Caco-2 (cell line): ENCODE measurements at regions of chr19 and their contacts with region 1.

Region 1: DNA sequence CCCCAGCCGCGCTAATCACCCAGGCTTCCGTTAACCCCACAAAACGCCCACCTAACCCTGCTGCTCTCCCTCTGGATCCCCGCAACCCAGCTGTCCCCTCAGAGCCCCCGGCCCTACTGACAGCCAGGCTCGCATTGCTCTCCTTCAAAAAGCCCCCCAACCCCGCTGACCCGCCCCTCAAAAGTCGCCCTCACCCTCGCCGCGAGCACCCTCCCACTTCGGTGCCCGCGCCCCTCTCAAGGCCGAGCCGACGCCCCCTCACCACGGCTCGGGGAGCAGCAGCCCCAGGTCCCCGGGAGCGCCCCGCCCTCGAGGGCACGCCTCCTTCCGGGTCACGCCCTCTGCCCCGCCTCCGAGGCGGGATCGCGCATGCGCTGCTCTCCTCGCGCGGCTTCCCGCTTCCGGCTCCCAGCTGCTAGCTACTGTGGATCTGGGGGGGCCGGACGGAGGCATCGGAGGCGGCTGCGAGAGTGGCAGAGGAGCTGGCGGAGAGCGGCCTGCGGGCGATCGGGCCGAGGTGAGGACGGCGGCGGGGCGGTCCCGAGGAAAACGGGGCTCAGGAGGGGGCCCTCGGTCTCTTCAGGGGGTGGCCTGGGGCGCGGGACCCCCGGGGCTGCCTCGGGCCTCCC is 46.1 kb downstream of the ARHGEF18 start:
- DNase-seq: peak; percentile 86 to 94
- H3K4me3 ChIP-seq: peak overlapping the region; percentile 98
- H3K4me3 Mint-ChIP-seq: peak overlapping the region; percentile 89
- H3K27ac Mint-ChIP-seq: peak overlapping the region; percentile 48
- H3K4me1 ChIP-seq: peaks cover 26% of the 10 kb centered on the region
- H3K4me1 Mint-ChIP-seq: peaks cover 16% of the 10 kb centered on the region
- H3K27me3 ChIP-seq: no peaks in the 10 kb centered on the region
- H3K27me3 Mint-ChIP-seq: no peaks in the 10 kb centered on the region
- CTCF ChIP-seq: peak in 1 of 2 experiments; percentile 21

Region 2: GRCh38 chr19:7326105-7326877 is 68.6 kb before region 1 on chr19:
- CTCF ChIA-PET with region 1: no interaction called
- POLR2A ChIA-PET with region 1: no interaction called
- intact Hi-C with region 1: no loop called
- DNase-seq: peak in 1 of 2 experiments; percentile 38
- H3K4me3 ChIP-seq: no peak overlapping the region
- H3K4me3 Mint-ChIP-seq: no peak overlapping the region
- H3K27ac Mint-ChIP-seq: no peak overlapping the region
- H3K4me1 ChIP-seq: peaks cover 3% of the 10 kb centered on the region
- H3K4me1 Mint-ChIP-seq: peaks cover 3% of the 10 kb centered on the region
- H3K27me3 ChIP-seq: no peaks in the 10 kb centered on the region
- H3K27me3 Mint-ChIP-seq: no peaks in the 10 kb centered on the region
- CTCF ChIP-seq: peak in 1 of 2 experiments; percentile 38

Region 3: GRCh38 chr19:7349961-7350711 is 44.7 kb before region 1 on chr19:
- CTCF ChIA-PET with region 1: interaction called, 3 read pairs
- POLR2A ChIA-PET with region 1: no interaction called
- intact Hi-C with region 1: loop called (anchors 5 kb)
- DNase-seq: peak in 1 of 2 experiments; percentile 15
- H3K4me3 ChIP-seq: no peak overlapping the region
- H3K4me3 Mint-ChIP-seq: no peak overlapping the region
- H3K27ac Mint-ChIP-seq: no peak overlapping the region
- H3K4me1 ChIP-seq: no peaks in the 10 kb centered on the region
- H3K4me1 Mint-ChIP-seq: peaks cover 12% of the 10 kb centered on the region
- H3K27me3 ChIP-seq: no peaks in the 10 kb centered on the region
- H3K27me3 Mint-ChIP-seq: no peaks in the 10 kb centered on the region
- CTCF ChIP-seq: no peak

Region 4: DNA sequence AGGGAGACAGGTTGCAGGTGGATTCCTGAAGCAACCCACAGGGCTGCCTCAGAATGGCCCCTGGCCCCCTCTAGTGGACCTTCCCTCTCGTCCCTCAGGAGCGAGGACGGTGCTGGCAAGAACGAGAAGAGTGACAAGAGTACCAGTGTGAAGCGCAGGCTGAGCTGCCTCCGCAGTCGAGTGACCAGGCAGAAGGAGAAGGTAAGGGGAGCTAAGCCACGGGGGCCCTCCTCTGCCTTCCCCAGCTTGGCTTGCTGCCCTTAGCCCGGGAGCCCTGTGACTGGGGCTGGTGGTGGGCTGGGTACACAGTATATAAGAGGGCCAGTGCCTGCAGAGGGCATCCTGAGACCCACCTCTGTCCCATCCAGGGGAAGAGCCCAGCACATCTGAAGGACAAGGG is 12.2 kb before region 1 on chr19:
- CTCF ChIA-PET with region 1: no interaction called
- POLR2A ChIA-PET with region 1: no interaction called
- intact Hi-C with region 1: no loop called
- DNase-seq: no peak
- H3K4me3 ChIP-seq: no peak overlapping the region
- H3K4me3 Mint-ChIP-seq: no peak overlapping the region
- H3K27ac Mint-ChIP-seq: no peak overlapping the region
- H3K4me1 ChIP-seq: peaks cover 20% of the 10 kb centered on the region
- H3K4me1 Mint-ChIP-seq: peaks cover 12% of the 10 kb centered on the region
- H3K27me3 ChIP-seq: no peaks in the 10 kb centered on the region
- H3K27me3 Mint-ChIP-seq: no peaks in the 10 kb centered on the region
- CTCF ChIP-seq: peak in 1 of 2 experiments; percentile 25

Region 5: DNA sequence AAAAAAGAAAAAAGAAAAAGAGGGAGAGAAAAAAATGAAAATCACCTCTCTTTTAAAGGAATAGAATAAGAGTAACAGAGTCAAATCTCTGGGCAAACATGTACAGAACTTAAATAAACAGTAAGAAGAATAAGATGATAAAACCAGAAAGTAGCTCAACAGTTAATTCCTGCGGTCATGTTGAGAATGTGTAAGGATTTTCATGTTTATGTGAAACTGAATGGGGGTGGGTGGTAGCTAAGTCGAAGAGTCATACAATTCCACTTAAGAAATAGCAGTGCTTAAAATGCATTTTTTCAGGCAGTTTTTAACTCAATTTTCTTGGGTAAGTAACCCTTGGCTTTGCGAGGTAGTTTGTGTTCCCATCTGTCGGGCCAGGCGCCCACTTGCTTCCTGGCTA is 33.1 kb after region 1 on chr19:
- CTCF ChIA-PET with region 1: no interaction called
- POLR2A ChIA-PET with region 1: no interaction called
- intact Hi-C with region 1: loop called (anchors 2 kb)
- DNase-seq: no peak
- H3K4me3 ChIP-seq: no peak overlapping the region
- H3K4me3 Mint-ChIP-seq: no peak overlapping the region
- H3K27ac Mint-ChIP-seq: no peak overlapping the region
- H3K4me1 ChIP-seq: peaks cover 56% of the 10 kb centered on the region
- H3K4me1 Mint-ChIP-seq: peaks cover 8% of the 10 kb centered on the region
- H3K27me3 ChIP-seq: no peaks in the 10 kb centered on the region
- H3K27me3 Mint-ChIP-seq: no peaks in the 10 kb centered on the region
- CTCF ChIP-seq: no peak

Region 6: GRCh38 chr19:7515645-7516151 is 120.9 kb after region 1 on chr19 and contains the start of gene ZNF358:
- CTCF ChIA-PET with region 1: no interaction called
- POLR2A ChIA-PET with region 1: no interaction called
- intact Hi-C with region 1: loop called (anchors 10 kb)
- DNase-seq: peak; percentile 79 to 85
- H3K4me3 ChIP-seq: peak within 1 kb of the TSS; percentile 75
- H3K4me3 Mint-ChIP-seq: peak within 1 kb of the TSS; percentile 74
- H3K27ac Mint-ChIP-seq: peak within 1 kb of the TSS; percentile 40
- H3K4me1 ChIP-seq: peaks cover 5% of the 10 kb centered on the region; the same call in 1 of the 2 replicates
- H3K4me1 Mint-ChIP-seq: peaks cover 8% of the 10 kb centered on the region
- H3K27me3 ChIP-seq: no peaks in the 10 kb centered on the region
- H3K27me3 Mint-ChIP-seq: no peaks in the 10 kb centered on the region
- CTCF ChIP-seq: no peak
- total RNA-seq, gene ZNF358: 29.4 TPM in 2 replicates